ENCODE measurements at regions of chr10 and their contacts with region 1.

Region 1: DNA sequence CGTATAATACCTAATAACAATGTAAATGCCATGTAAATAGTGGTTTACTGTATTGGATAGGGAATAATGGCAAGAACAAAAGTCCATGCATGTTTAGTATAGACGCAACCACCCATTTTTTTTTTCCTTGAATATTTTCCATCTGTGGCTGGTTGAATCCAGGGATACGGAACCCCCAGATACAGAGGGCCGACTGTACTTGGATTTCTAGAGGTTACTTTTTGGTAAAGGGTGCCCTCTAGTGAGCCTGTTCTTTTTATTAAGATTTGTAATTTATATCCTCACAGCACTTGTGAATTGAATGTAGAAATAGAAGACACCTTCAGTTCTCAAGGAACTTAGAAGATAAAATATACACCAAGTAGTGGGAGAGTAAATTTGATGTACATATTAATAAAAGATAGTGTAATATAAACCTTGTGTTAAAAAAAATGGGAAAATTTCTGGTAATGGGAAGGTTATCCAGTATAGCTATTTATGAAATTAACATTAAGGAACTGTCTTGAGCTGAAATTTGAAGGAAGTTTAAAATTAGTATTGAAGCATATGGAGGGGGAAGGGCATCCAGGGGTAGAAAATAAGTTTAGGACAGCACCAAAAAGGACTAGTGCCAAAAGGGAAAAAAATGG is 32.0 kb downstream of the EXOC6 start:
- DNase-seq: no peak
- ATAC-seq: peak; percentile 83
- H3K4me3 ChIP-seq: no peak overlapping the region
- H3K27ac ChIP-seq: no peak overlapping the region
- H3K4me1 ChIP-seq: no peaks in the 10 kb centered on the region
- H3K27me3 ChIP-seq: no peaks in the 10 kb centered on the region
- CTCF ChIP-seq: peak; percentile 29 to 57 (median 32); a peak in 4 of 6 replicates
- EP300 ChIP-seq: no peak
- POLR2A ChIP-seq: no peak
- RAD21 ChIP-seq: peak; percentile 76

Region 2: GRCh38 chr10:92057361-92057760 is 823.0 kb before region 1 on chr10:
- CTCF ChIA-PET with region 1: no interaction called
- POLR2A ChIA-PET with region 1: no interaction called
- RAD21 ChIA-PET with region 1: no interaction called
- SMC1A ChIA-PET with region 1: no interaction called
- in situ Hi-C with region 1: no loop called
- intact Hi-C with region 1: no loop called
- DNase-seq: no peak
- ATAC-seq: no peak
- H3K4me3 ChIP-seq: no peak overlapping the region
- H3K27ac ChIP-seq: no peak overlapping the region
- H3K4me1 ChIP-seq: no peaks in the 10 kb centered on the region
- H3K27me3 ChIP-seq: no peaks in the 10 kb centered on the region
- CTCF ChIP-seq: no peak
- EP300 ChIP-seq: no peak
- POLR2A ChIP-seq: no peak
- RAD21 ChIP-seq: no peak

Region 3: GRCh38 chr10:92517034-92517655 is 363.2 kb before region 1 on chr10:
- CTCF ChIA-PET with region 1: interaction called, 14 read pairs
- POLR2A ChIA-PET with region 1: no interaction called
- RAD21 ChIA-PET with region 1: interaction called, 3 read pairs
- SMC1A ChIA-PET with region 1: interaction called, 3 read pairs
- in situ Hi-C with region 1: loop called (anchors 10 kb)
- intact Hi-C with region 1: no loop called
- DNase-seq: peak; percentile 38
- ATAC-seq: peak; percentile 100
- H3K4me3 ChIP-seq: no peak overlapping the region
- H3K27ac ChIP-seq: no peak overlapping the region
- H3K4me1 ChIP-seq: no peaks in the 10 kb centered on the region
- H3K27me3 ChIP-seq: no peaks in the 10 kb centered on the region
- CTCF ChIP-seq: peak; percentile 69 to 81 (median 74)
- EP300 ChIP-seq: no peak
- POLR2A ChIP-seq: no peak
- RAD21 ChIP-seq: peak; percentile 76

Region 4: DNA sequence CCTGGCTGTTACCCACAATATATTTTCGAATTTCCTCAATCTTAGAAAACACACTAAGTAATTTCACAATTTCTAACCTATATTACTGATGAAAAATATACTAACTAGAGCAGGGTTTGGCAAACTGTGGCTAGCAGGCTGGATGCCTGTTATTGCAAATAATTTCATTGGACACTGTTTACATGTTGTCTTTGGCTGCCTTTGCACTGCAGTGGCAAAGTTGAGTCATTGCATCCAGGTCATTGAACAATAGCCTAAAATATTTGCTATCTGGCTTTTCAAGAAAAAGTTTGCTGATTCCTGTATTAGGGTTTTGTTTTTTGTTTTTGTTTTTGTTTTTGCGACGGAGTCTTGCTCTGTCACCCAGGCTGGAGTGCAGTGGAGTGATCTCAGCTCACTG is 240.2 kb before region 1 on chr10:
- CTCF ChIA-PET with region 1: interaction called, 5 read pairs
- POLR2A ChIA-PET with region 1: no interaction called
- RAD21 ChIA-PET with region 1: no interaction called
- SMC1A ChIA-PET with region 1: no interaction called
- in situ Hi-C with region 1: no loop called
- intact Hi-C with region 1: loop called (anchors 5 kb)
- DNase-seq: no peak
- ATAC-seq: no peak
- H3K4me3 ChIP-seq: no peak overlapping the region
- H3K27ac ChIP-seq: no peak overlapping the region
- H3K4me1 ChIP-seq: no peaks in the 10 kb centered on the region
- H3K27me3 ChIP-seq: no peaks in the 10 kb centered on the region
- CTCF ChIP-seq: no peak
- EP300 ChIP-seq: no peak
- POLR2A ChIP-seq: no peak
- RAD21 ChIP-seq: no peak

Region 5: GRCh38 chr10:92848441-92849233 is 31.7 kb before region 1 on chr10 and contains the start of gene EXOC6:
- CTCF ChIA-PET with region 1: interaction called, 45 read pairs
- POLR2A ChIA-PET with region 1: no interaction called
- RAD21 ChIA-PET with region 1: interaction called, 13 read pairs
- SMC1A ChIA-PET with region 1: interaction called, 11 read pairs
- in situ Hi-C with region 1: no loop called
- intact Hi-C with region 1: loop called (anchors 1 kb)
- DNase-seq: peak; percentile 20
- ATAC-seq: peak; percentile 90
- H3K4me3 ChIP-seq: peak within 1 kb of the TSS; percentile 93
- H3K27ac ChIP-seq: peak within 1 kb of the TSS; percentile 75
- H3K4me1 ChIP-seq: peaks cover 17% of the 10 kb centered on the region
- H3K27me3 ChIP-seq: no peaks in the 10 kb centered on the region
- CTCF ChIP-seq: peak in 2 of 3 experiments; percentile 12 to 13; a peak in 2 of 6 replicates
- EP300 ChIP-seq: no peak
- POLR2A ChIP-seq: peak; percentile 89
- RAD21 ChIP-seq: no peak
- polyA plus RNA-seq, gene EXOC6: 8.2 to 8.4 TPM

Region 6: DNA sequence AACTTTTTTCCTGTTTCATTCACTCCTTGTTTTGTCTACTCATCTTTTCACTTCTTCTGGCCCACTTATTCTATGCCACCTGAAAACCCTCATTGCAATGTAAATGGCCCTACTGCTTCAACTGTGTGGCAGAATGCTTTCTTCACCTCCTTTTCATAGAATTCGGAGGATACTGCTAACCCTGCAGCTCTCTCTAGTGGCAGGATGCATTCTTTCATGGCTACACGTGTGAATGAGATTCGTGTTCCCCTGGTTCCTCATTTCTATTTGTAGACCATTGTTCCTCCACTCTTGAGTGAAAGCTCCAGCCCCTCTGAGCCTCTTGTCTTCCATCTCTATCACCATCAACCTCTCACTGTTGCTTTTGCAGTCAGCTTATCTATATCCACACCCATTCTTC is 159.4 kb after region 1 on chr10:
- CTCF ChIA-PET with region 1: interaction called, 5 read pairs
- POLR2A ChIA-PET with region 1: no interaction called
- RAD21 ChIA-PET with region 1: interaction called, 3 read pairs
- SMC1A ChIA-PET with region 1: no interaction called
- in situ Hi-C with region 1: no loop called
- intact Hi-C with region 1: loop called (anchors 1 kb)
- DNase-seq: peak; percentile 16
- ATAC-seq: peak; percentile 79
- H3K4me3 ChIP-seq: no peak overlapping the region
- H3K27ac ChIP-seq: no peak overlapping the region
- H3K4me1 ChIP-seq: no peaks in the 10 kb centered on the region
- H3K27me3 ChIP-seq: no peaks in the 10 kb centered on the region
- CTCF ChIP-seq: peak; percentile 53 to 69 (median 59)
- EP300 ChIP-seq: no peak
- POLR2A ChIP-seq: no peak
- RAD21 ChIP-seq: peak; percentile 80

Measured in GM12878 (cell line).